HCT116 (cell line): ENCODE measurements at regions of chr2 and their contacts with region 1.

Region 1: GRCh38 chr2:218898109-218898878 is 17.6 kb downstream of the WNT10A start:
- DNase-seq: no peak
- ATAC-seq: peak; percentile 53
- H3K4me3 ChIP-seq: peak overlapping the region; percentile 42 to 76
- H3K27ac ChIP-seq: no peak overlapping the region
- H3K4me1 ChIP-seq: peaks cover 51 to 62% of the 10 kb centered on the region in 2 experiments
- H3K27me3 ChIP-seq: no peaks in the 10 kb centered on the region
- CTCF ChIP-seq: peak in 2 of 3 experiments; percentile 90 to 94; a peak in 4 of 6 replicates
- POLR2A ChIP-seq: no peak
- RAD21 ChIP-seq: no peak

Region 2: GRCh38 chr2:218745559-218746469 is 152.5 kb before region 1 on chr2:
- CTCF ChIA-PET with region 1: no interaction called
- POLR2A ChIA-PET with region 1: no interaction called
- RAD21 ChIA-PET with region 1: no interaction called
- intact Hi-C with region 1: no loop called
- DNase-seq: peak; percentile 12
- ATAC-seq: peak; percentile 54
- H3K4me3 ChIP-seq: no peak overlapping the region
- H3K27ac ChIP-seq: no peak overlapping the region
- H3K4me1 ChIP-seq: peaks cover 0 to 9% of the 10 kb centered on the region in 2 experiments; a peak in 1 of 4 replicates
- H3K27me3 ChIP-seq: no peaks in the 10 kb centered on the region
- CTCF ChIP-seq: no peak
- POLR2A ChIP-seq: no peak
- RAD21 ChIP-seq: no peak

Region 3: GRCh38 chr2:218832520-218832919 is 65.8 kb before region 1 on chr2:
- CTCF ChIA-PET with region 1: no interaction called
- POLR2A ChIA-PET with region 1: no interaction called
- RAD21 ChIA-PET with region 1: no interaction called
- intact Hi-C with region 1: no loop called
- DNase-seq: no peak
- ATAC-seq: peak; percentile 57
- H3K4me3 ChIP-seq: peak overlapping the region in 1 of 2 experiments; percentile 5; a peak in 1 of 4 replicates
- H3K27ac ChIP-seq: no peak overlapping the region
- H3K4me1 ChIP-seq: peaks cover 28 to 40% of the 10 kb centered on the region in 2 experiments
- H3K27me3 ChIP-seq: no peaks in the 10 kb centered on the region
- CTCF ChIP-seq: no peak
- POLR2A ChIP-seq: no peak
- RAD21 ChIP-seq: no peak

Region 4: DNA sequence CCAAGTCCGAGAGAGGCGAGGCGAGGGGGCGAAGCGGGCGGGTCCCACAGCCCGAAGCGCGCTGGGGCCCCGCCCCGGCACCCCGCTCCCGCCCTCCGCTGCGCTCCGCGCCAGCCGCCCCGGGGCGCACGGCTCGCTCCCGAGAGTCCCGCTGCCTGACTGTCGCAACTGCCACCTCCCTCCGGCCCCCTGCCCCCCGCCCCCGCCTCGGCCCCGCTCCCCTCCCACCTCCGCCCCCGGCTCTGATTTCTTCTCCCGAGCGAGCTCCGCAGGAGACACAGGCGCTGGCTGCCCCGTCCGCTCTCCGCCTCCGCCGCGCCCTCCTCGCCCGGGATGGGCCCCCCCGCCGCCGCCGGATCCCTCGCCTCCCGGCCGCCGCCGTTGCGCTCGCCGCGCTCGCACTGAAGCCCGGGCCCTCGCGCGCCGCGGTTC is 38.7 kb before region 1 on chr2 and contains the start of gene WNT6:
- CTCF ChIA-PET with region 1: interaction called, 35 read pairs
- POLR2A ChIA-PET with region 1: no interaction called
- RAD21 ChIA-PET with region 1: no interaction called
- intact Hi-C with region 1: no loop called
- DNase-seq: no peak
- ATAC-seq: peak; percentile 53
- H3K4me3 ChIP-seq: peak within 1 kb of the TSS; percentile 44 to 61
- H3K27ac ChIP-seq: no peak within 1 kb of the TSS; the same call in 1 of the 2 replicates
- H3K4me1 ChIP-seq: peaks cover 12 to 34% of the 10 kb centered on the region in 2 experiments
- H3K27me3 ChIP-seq: peaks cover 13% of the 10 kb centered on the region; the same call in 1 of the 2 replicates
- CTCF ChIP-seq: no peak
- POLR2A ChIP-seq: no peak
- RAD21 ChIP-seq: no peak
- total RNA-seq, gene WNT6: 1.4 TPM

Region 5: GRCh38 chr2:218876562-218877219 is 21.6 kb before region 1 on chr2:
- CTCF ChIA-PET with region 1: interaction called, 278 read pairs
- POLR2A ChIA-PET with region 1: interaction called, 7 read pairs
- RAD21 ChIA-PET with region 1: interaction called, 30 to 48 read pairs
- intact Hi-C with region 1: loop called (anchors 1 kb)
- DNase-seq: peak; percentile 59
- ATAC-seq: peak; percentile 69
- H3K4me3 ChIP-seq: no peak overlapping the region
- H3K27ac ChIP-seq: no peak overlapping the region
- H3K4me1 ChIP-seq: peaks cover 5 to 14% of the 10 kb centered on the region in 2 experiments; a peak in 3 of 4 replicates
- H3K27me3 ChIP-seq: no peaks in the 10 kb centered on the region
- CTCF ChIP-seq: peak; percentile 97 to 99 (median 98)
- POLR2A ChIP-seq: no peak
- RAD21 ChIP-seq: peak; percentile 99

Region 6: DNA sequence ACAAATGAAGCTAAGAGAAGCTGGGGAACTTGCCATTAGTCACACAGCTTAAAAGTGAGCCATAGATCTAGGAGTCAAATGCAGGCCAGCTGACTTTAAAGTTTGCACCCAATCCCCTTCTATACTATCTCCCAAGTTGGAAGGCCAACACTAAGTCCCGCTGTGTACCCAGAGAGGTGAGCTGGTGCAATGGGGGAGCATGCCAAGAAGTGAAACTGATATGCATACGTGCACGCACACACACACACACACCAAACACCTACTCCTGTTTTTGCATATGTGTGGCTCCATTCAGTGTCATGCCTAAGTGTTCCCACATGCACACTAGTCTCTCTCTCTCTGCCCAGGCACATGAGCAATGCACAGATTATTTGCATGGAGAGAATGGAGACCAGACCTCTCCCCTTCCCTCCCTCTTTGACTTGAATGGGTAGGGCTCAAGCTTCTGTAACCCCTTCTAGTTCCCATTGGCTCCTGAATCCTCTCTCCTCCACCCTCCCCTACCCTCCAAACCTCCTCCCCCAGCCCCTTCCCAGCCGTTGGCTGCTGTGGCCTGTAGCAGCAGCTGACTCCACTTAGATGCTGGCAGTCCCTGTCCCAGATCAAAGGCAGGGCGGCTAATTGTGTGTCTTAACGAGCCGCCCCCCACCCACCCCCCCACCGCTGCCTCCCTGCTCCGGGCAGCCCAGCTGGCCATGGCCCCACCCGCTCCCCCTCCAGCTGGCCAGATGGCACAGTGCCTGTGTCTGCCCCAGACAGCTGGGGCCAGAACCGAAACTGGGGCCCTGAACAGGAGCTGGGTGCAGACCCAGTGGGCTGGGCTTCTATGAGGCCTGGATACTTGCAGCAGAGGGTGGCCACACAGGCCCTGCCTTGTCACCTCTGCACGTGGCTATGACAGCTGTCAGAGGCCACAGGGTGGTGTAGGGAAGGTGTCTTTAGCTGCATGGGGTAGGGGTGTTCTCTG is 12.0 kb before region 1 on chr2:
- CTCF ChIA-PET with region 1: interaction called, 278 read pairs
- POLR2A ChIA-PET with region 1: interaction called, 4 read pairs
- RAD21 ChIA-PET with region 1: no interaction called
- intact Hi-C with region 1: no loop called
- DNase-seq: no peak
- ATAC-seq: no peak
- H3K4me3 ChIP-seq: no peak overlapping the region
- H3K27ac ChIP-seq: no peak overlapping the region
- H3K4me1 ChIP-seq: peaks cover 15 to 21% of the 10 kb centered on the region in 2 experiments
- H3K27me3 ChIP-seq: no peaks in the 10 kb centered on the region
- CTCF ChIP-seq: no peak
- POLR2A ChIP-seq: no peak
- RAD21 ChIP-seq: no peak

Region 7: GRCh38 chr2:218908721-218909619 is 10.7 kb after region 1 on chr2:
- CTCF ChIA-PET with region 1: interaction called, 53 read pairs
- POLR2A ChIA-PET with region 1: interaction called, 6 read pairs
- RAD21 ChIA-PET with region 1: no interaction called
- intact Hi-C with region 1: no loop called
- DNase-seq: peak; percentile 78
- ATAC-seq: peak; percentile 96
- H3K4me3 ChIP-seq: peak overlapping the region; percentile 36 to 49
- H3K27ac ChIP-seq: peak overlapping the region; percentile 44
- H3K4me1 ChIP-seq: peaks cover 7 to 17% of the 10 kb centered on the region in 2 experiments
- H3K27me3 ChIP-seq: no peaks in the 10 kb centered on the region
- CTCF ChIP-seq: no peak
- POLR2A ChIP-seq: peak; percentile 21
- RAD21 ChIP-seq: no peak

Region 8: GRCh38 chr2:218979846-218980734 is 81.8 kb after region 1 on chr2:
- CTCF ChIA-PET with region 1: interaction called, 10 read pairs
- POLR2A ChIA-PET with region 1: no interaction called
- RAD21 ChIA-PET with region 1: no interaction called
- intact Hi-C with region 1: no loop called
- DNase-seq: peak; percentile 68
- ATAC-seq: peak; percentile 98
- H3K4me3 ChIP-seq: peak overlapping the region; percentile 38 to 54
- H3K27ac ChIP-seq: no peak overlapping the region
- H3K4me1 ChIP-seq: peaks cover 0 to 10% of the 10 kb centered on the region in 2 experiments; a peak in 1 of 4 replicates
- H3K27me3 ChIP-seq: no peaks in the 10 kb centered on the region
- CTCF ChIP-seq: peak; percentile 88 to 99 (median 99)
- POLR2A ChIP-seq: no peak
- RAD21 ChIP-seq: peak; percentile 91

Region 9: GRCh38 chr2:219079417-219079816 is 181.1 kb after region 1 on chr2:
- CTCF ChIA-PET with region 1: no interaction called
- POLR2A ChIA-PET with region 1: no interaction called
- RAD21 ChIA-PET with region 1: no interaction called
- intact Hi-C with region 1: no loop called
- DNase-seq: no peak
- ATAC-seq: no peak
- H3K4me3 ChIP-seq: no peak overlapping the region
- H3K27ac ChIP-seq: no peak overlapping the region
- H3K4me1 ChIP-seq: no peaks in the 10 kb centered on the region
- H3K27me3 ChIP-seq: no peaks in the 10 kb centered on the region
- CTCF ChIP-seq: no peak
- POLR2A ChIP-seq: no peak
- RAD21 ChIP-seq: no peak

Region 10: GRCh38 chr2:219514196-219514761 is 616.0 kb after region 1 on chr2 and contains the start of gene ASIC4:
- CTCF ChIA-PET with region 1: no interaction called
- POLR2A ChIA-PET with region 1: no interaction called
- RAD21 ChIA-PET with region 1: no interaction called
- intact Hi-C with region 1: no loop called
- DNase-seq: no peak
- ATAC-seq: no peak
- H3K4me3 ChIP-seq: no peak within 1 kb of the TSS
- H3K27ac ChIP-seq: no peak within 1 kb of the TSS
- H3K4me1 ChIP-seq: peaks cover 0 to 29% of the 10 kb centered on the region in 2 experiments; a peak in 2 of 4 replicates
- H3K27me3 ChIP-seq: no peaks in the 10 kb centered on the region
- CTCF ChIP-seq: no peak
- POLR2A ChIP-seq: no peak
- RAD21 ChIP-seq: no peak
- total RNA-seq, gene ASIC4: 2.1 TPM